A549 (cell line): ENCODE measurements at regions of chr2 and their contacts with region 1.

Region 1: DNA sequence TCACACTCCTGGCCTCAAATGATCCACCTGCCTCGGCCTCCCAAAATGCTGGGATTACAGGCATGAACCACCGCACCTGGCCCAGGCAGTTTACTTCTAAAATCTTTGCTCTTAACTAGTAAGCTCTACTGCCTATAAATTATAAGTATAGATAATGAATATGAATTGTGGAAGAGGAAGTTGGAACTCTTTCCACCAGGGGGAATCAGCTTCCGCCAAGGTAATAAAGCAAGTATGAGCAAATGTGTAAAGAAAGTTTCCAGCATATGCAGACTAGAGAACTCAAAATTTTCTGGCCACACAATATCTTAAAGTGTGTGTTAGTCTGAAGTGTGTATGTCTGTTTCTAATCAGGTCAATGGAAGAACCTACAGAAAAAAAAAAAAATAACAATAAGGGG is 68.1 kb downstream of the RMDN2 start:
- DNase-seq: peak in 1 of 2 experiments; percentile 22
- ATAC-seq: no peak
- H3K4me3 ChIP-seq: no peak overlapping the region
- H3K27ac ChIP-seq: no peak overlapping the region
- H3K4me1 ChIP-seq: 0 out of 3 replicates have a peak, but pooled peaks cover 5% of the 10 kb centered on the region
- CTCF ChIP-seq: no peak
- EP300 ChIP-seq: no peak
- POLR2A ChIP-seq: no peak
- RAD21 ChIP-seq: peak in 1 of 2 experiments; percentile 19; a peak in 1 of 5 replicates

Region 2: DNA sequence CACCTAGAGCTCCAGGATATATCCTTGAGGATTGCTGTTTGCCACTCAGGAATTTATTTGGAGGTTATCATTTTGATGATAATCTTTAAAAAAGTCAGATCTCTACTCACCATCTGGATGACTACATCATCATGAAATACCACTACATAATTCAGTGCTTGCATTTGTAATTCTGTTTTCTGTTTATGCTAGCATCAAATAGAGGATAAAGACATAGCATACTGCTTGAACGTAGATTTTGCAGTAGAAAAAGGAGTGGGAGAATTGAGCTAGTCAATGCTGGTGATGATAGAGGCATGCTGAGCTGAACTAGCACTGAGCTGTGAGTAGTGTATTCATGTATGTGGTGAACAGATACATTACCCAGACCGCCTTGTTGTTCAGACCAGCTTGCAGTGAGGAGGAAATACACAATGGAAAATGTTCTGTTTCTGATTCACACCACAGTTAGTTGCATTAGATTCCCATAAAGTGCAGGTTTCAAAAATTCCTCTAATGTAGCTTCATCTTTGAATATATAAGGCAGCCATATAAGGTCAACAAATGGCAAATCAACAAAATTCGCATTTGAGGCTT is 252.9 kb before region 1 on chr2:
- CTCF ChIA-PET with region 1: no interaction called
- POLR2A ChIA-PET with region 1: no interaction called
- DNase-seq: no peak
- ATAC-seq: no peak
- H3K4me3 ChIP-seq: no peak overlapping the region
- H3K27ac ChIP-seq: no peak overlapping the region
- H3K4me1 ChIP-seq: no peaks in the 10 kb centered on the region
- CTCF ChIP-seq: no peak
- EP300 ChIP-seq: no peak
- POLR2A ChIP-seq: no peak
- RAD21 ChIP-seq: no peak

Region 3: DNA sequence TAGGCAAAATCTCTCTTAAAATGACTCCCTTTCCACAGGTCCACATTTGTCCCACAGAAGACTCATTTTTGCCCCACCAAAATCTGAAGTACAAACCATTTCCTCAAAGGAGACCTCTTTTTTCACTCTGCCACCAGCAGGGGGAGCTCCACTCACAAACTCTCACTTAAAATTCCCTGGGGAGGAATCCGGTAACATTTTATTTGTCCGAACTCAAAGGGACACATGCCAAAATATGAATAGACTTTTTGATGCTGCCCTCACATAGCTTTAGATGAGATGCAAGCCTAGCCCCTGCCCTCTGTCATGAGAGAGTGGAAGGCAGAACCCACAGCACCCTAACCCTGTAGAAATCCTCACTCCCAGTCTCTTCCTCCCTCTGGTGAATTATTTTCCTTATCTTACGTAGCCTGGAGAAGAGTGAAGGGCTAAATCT is 11.0 kb before region 1 on chr2:
- CTCF ChIA-PET with region 1: interaction called, 12 read pairs
- POLR2A ChIA-PET with region 1: no interaction called
- DNase-seq: peak in 1 of 2 experiments; percentile 64
- ATAC-seq: peak; percentile 82 to 85
- H3K4me3 ChIP-seq: peak overlapping the region; percentile 29; the same call in 1 of the 3 replicates
- H3K27ac ChIP-seq: 0 out of 6 replicates have a peak overlapping the region, but pooled peaks have one; percentile 21 to 22
- H3K4me1 ChIP-seq: peaks cover 4% of the 10 kb centered on the region; the same call in 1 of the 3 replicates
- CTCF ChIP-seq: peak; percentile 99
- EP300 ChIP-seq: no peak
- POLR2A ChIP-seq: no peak
- RAD21 ChIP-seq: peak; percentile 81 to 89

Region 4: GRCh38 chr2:38194741-38195140 is 201.6 kb after region 1 on chr2:
- CTCF ChIA-PET with region 1: no interaction called
- POLR2A ChIA-PET with region 1: no interaction called
- DNase-seq: no peak
- ATAC-seq: no peak
- H3K4me3 ChIP-seq: no peak overlapping the region
- H3K27ac ChIP-seq: no peak overlapping the region
- H3K4me1 ChIP-seq: peaks cover 8% of the 10 kb centered on the region; the same call in 2 of the 3 replicates
- CTCF ChIP-seq: no peak
- EP300 ChIP-seq: no peak
- POLR2A ChIP-seq: no peak
- RAD21 ChIP-seq: no peak